Colonic mucosa (tissue), 4 donors: ENCODE measurements at regions of chr6 and their contacts with region 1.

Region 1: DNA sequence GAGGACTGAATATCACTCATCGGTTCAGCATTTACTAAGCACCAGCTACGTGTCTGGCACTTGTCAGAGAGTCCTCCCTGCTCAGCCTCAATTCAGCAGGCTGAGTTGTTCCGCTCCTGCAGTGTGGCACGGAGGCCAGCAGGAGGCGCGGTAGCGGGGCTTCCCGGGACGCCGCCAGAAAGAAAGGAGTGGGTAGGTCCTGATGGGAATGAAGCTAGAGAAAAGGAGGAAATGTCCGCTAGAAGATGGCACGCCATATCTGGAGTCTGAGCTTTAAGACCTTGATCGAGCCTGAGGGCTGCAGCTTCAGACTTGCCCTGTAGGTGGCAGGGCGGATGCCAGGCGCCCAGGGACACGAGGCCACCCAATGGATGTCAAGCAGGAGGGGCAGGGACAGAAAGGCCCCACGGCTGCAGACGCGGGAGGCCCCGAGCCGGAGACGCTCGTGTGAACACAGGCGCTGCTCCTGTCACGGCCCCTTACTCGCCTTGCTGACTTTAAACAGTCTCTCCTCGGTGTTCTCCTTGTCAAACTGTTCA is 18.7 kb downstream of the SERPINB6 start:
- DNase-seq: peak; percentile 89
- H3K4me3 ChIP-seq: no peak overlapping the region
- H3K27ac ChIP-seq: peak overlapping the region; percentile 51
- H3K4me1 ChIP-seq: peaks cover 9% of the 10 kb centered on the region
- H3K27me3 ChIP-seq: no peaks in the 10 kb centered on the region
- CTCF ChIP-seq: peak; percentile 96

Region 2: DNA sequence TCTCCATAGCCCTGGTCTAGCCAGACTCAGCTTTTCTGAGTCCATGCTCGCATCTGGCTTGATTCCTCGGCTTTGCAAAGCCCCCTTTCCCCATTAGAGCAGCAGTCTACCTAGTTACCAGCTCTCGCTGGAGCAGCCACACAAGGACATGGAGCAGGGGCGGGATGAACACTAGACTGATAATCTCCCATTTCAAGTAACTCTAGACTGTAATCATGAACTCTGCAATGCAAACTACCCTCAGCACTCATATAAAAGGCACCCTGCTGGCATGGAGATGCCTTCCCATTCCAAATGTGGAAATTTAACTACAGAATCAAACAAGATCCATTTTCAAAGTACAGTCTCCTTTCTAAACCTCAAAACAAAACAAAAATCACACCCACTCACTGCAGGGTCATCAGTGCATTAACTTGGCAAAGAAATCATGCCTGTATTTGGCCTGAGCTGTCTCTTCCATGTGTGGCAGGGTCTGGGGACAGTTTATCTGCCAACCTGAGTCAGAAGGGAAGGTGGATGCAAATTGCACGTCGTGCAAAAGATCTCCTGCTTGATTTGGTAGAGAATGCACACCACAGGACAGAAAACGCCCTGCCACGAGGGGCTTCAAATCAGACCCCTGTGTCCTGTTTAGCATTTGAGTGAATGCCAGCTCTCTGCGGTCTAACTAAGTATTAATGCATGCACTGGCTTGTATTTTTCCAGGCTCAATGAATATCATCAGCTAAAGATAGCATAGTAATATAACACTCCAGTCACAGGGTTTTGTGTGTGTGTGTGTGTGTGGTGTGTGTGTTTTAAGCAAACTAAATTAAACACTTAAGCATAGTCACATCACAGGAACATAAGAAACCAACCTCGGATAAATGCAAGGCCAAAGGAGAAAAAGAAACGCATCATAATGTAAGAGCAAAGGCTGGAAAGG is 287.2 kb before region 1 on chr6:
- intact Hi-C with region 1: no loop called
- DNase-seq: no peak
- H3K4me3 ChIP-seq: no peak overlapping the region
- H3K27ac ChIP-seq: no peak overlapping the region
- H3K4me1 ChIP-seq: no peaks in the 10 kb centered on the region
- H3K27me3 ChIP-seq: no peaks in the 10 kb centered on the region
- CTCF ChIP-seq: no peak

Region 3: GRCh38 chr6:2988426-2989331 is 36.1 kb after region 1 on chr6:
- intact Hi-C with region 1: loop called (anchors 2 kb)
- DNase-seq: peak; percentile 91
- H3K4me3 ChIP-seq: peak overlapping the region; percentile 54
- H3K27ac ChIP-seq: peak overlapping the region; percentile 97
- H3K4me1 ChIP-seq: peaks cover 20% of the 10 kb centered on the region
- H3K27me3 ChIP-seq: no peaks in the 10 kb centered on the region
- CTCF ChIP-seq: peak; percentile 89